ENCODE measurements at regions of chr6 and their contacts with region 1.

Region 1: GRCh38 chr6:166775180-166776081 is 148.4 kb upstream of the RPS6KA2 start:
- DNase-seq: peak in 1 of 2 donors; percentile 28
- ATAC-seq: peak in 1 of 2 donors; percentile 69
- H3K4me3 ChIP-seq: no peak overlapping the region
- H3K27ac ChIP-seq: no peak overlapping the region
- H3K4me1 ChIP-seq: no peaks in the 10 kb centered on the region
- H3K27me3 ChIP-seq: peaks cover 0 to 7% (median 0%) of the 10 kb centered on the region in 3 donors
- CTCF ChIP-seq: peak; percentile 60 to 91 (median 73)
- POLR2A ChIP-seq: no peak

Region 2: GRCh38 chr6:166365221-166365620 is 410.2 kb before region 1 on chr6:
- in situ Hi-C with region 1: no loop called
- intact Hi-C with region 1: no loop called
- DNase-seq: peak in 1 of 2 donors; percentile 19
- ATAC-seq: peak; percentile 49 to 55
- H3K4me3 ChIP-seq: no peak overlapping the region
- H3K27ac ChIP-seq: peak overlapping the region; percentile 66 to 72 (median 70)
- H3K4me1 ChIP-seq: peaks cover 39 to 47% of the 10 kb centered on the region in 2 donors
- H3K27me3 ChIP-seq: no peaks in the 10 kb centered on the region
- CTCF ChIP-seq: no peak
- POLR2A ChIP-seq: no peak

Region 3: DNA sequence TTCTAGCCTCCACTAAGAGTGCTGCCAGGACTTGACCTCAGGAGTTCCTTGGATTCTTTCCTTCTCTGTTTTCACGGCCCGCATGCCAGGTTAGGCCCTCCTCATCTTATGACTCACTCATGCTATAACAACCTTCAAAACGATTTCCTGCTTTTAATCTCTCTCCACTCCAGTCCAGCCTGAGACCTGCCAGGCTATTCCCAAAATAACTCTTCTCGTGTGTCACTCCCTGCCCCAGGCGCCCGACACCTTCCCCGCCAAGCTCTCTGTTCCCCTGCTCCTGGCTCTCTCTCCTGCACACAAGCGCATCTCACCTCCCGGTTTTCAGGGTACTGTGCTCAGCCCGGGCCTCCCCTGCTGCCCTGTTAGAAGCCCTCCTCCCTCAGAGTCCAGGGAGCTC is 84.2 kb before region 1 on chr6:
- in situ Hi-C with region 1: no loop called
- intact Hi-C with region 1: no loop called
- DNase-seq: peak; percentile 83 to 92
- ATAC-seq: peak; percentile 78 to 82
- H3K4me3 ChIP-seq: peak overlapping the region; percentile 38 to 50 (median 47)
- H3K27ac ChIP-seq: peak overlapping the region; percentile 89 to 97 (median 96)
- H3K4me1 ChIP-seq: peaks cover 24 to 26% of the 10 kb centered on the region in 2 donors
- H3K27me3 ChIP-seq: no peaks in the 10 kb centered on the region
- CTCF ChIP-seq: no peak
- POLR2A ChIP-seq: peak; percentile 55 to 58

Region 4: DNA sequence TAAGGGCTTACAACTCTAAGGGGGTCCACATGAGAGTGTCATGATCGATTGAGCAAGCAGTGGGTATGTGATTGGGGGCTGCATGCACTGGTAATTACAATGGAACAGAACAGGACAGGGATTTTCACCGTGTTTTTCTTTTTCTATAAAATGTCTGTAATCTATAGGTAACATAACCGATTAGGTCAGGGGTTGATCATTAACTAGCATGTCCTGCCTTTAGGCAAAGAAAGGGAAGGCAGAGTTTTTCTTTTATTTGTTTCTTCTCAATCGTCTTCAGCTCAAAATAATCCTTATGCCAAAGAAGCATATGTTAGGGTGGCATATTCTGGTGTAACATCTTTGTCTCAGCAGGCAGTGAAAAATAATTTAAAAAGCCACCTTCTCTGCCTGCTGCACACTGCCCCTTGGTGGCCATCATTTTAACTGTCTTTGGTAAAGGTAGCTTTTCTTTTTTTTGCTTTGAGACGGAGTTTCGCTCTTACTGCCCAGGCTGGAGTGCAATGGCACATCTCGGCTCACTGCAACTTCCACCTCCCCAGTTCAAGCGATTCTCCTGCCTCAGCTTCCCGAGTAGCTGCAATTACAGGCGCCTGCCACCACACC is 214.1 kb after region 1 on chr6:
- in situ Hi-C with region 1: loop called in 3 of 4 experiments (anchors 25 kb)
- intact Hi-C with region 1: loop called (anchors 2 kb)
- DNase-seq: no peak
- ATAC-seq: no peak
- H3K4me3 ChIP-seq: no peak overlapping the region
- H3K27ac ChIP-seq: no peak overlapping the region
- H3K4me1 ChIP-seq: no peaks in the 10 kb centered on the region
- H3K27me3 ChIP-seq: no peaks in the 10 kb centered on the region
- CTCF ChIP-seq: peak in 1 of 5 experiments; percentile 17
- POLR2A ChIP-seq: no peak

Region 5: DNA sequence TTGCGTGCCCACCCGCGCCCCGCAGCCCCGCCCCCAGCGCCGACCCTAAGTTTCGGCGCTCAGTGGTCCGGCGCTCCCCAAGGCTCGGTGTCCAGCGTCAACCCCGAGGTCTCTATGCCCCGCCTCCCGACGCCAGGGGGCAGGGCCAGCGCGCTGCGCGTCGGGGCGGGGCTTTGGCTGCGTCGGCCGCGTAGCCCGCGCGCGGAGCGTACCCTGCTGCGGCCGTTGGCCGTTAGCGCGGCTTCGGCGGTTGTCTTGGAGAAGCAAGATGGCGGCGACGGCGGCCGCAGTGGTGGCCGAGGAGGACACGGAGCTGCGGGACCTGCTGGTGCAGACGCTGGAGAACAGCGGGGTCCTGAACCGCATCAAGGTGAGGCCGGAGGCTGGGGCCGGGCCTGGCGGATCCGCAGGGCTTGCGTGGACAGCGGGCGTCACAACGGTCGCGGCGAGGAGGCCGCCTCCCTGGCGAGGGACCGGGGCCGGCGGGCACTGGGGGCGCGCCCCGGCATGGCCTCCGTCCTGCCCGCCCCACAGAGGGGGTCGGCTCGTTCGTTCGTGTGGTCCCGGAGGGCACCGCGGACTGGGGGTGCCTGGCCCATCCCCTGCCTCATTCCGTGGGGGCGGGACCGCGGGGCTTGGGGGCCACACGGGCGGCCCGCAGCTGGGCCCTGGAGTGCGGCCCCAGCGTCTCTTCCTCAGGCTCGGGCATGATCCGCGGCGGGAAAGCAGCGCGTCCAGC is 223.9 kb after region 1 on chr6 and contains the start of gene CEP43:
- in situ Hi-C with region 1: loop called in 3 of 4 experiments (anchors 25 kb)
- intact Hi-C with region 1: no loop called
- DNase-seq: peak; percentile 83 to 88
- ATAC-seq: peak; percentile 95 to 96
- H3K4me3 ChIP-seq: peak within 1 kb of the TSS; percentile 66 to 97 (median 75)
- H3K27ac ChIP-seq: peak within 1 kb of the TSS; percentile 54 to 79 (median 67)
- H3K4me1 ChIP-seq: peaks cover 9 to 18% of the 10 kb centered on the region in 2 donors
- H3K27me3 ChIP-seq: no peaks in the 10 kb centered on the region
- CTCF ChIP-seq: peak in 2 of 5 experiments; percentile 20 to 21
- POLR2A ChIP-seq: no peak
- total RNA-seq, gene CEP43: 4.4 to 8.3 (median 5.9) TPM

Region 6: DNA sequence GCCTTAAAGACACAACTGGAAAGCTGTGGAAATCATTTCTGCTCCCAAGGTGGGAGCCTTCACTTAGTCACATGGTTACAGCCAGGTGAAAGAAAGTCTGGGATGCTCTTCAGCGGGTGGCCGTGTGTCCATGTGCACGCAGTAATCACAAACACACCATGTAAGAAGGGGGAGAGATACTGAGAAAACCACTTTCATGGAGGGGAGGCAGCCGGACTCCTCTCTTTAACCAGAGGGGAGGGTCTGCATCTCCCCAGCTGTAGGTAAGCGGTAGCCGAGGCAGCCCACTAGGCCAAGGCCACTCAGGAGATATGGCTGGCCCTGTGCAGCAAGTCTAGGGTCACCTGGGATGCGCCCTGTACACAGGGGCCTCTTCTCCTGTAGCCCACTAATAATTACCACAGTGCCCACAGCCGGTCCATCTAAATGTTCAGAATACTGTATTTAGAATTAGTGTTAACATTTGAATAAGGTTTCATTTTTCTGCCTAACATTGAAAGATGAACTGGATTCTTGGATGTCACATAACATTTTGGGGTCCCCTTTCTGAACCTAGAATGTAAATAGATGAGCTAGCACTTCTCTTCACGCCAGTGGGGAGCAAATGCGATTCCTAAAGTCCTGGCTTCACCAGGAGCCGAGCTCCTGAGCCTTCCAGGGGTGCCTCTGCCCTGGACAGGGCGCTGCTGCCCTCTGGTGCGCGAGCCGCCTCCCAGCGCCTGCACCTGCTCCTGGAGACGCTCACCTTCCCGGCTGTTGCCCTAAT is 366.4 kb after region 1 on chr6:
- in situ Hi-C with region 1: loop called in 2 of 4 experiments (anchors 25 kb)
- intact Hi-C with region 1: loop called (anchors 10 kb)
- DNase-seq: no peak
- ATAC-seq: no peak
- H3K4me3 ChIP-seq: no peak overlapping the region
- H3K27ac ChIP-seq: no peak overlapping the region
- H3K4me1 ChIP-seq: no peaks in the 10 kb centered on the region
- H3K27me3 ChIP-seq: peaks cover 0 to 13% (median 0%) of the 10 kb centered on the region in 3 donors
- CTCF ChIP-seq: peak in 3 of 5 experiments; percentile 28 to 51 (median 39)
- POLR2A ChIP-seq: no peak

Region 7: GRCh38 chr6:167285077-167285770 is 509.8 kb after region 1 on chr6:
- in situ Hi-C with region 1: loop called in 1 of 4 experiments (anchors 25 kb)
- intact Hi-C with region 1: no loop called
- DNase-seq: no peak
- ATAC-seq: no peak
- H3K4me3 ChIP-seq: no peak overlapping the region
- H3K27ac ChIP-seq: no peak overlapping the region
- H3K4me1 ChIP-seq: no peaks in the 10 kb centered on the region
- H3K27me3 ChIP-seq: peaks cover 0 to 2% (median 0%) of the 10 kb centered on the region in 3 donors
- CTCF ChIP-seq: no peak
- POLR2A ChIP-seq: no peak